ENCODE measurements at regions of chr5 and their contacts with region 1.

Region 1: GRCh38 chr5:148730943-148731861 is 76.9 kb upstream of the HTR4 start:
- DNase-seq: peak; percentile 87
- ATAC-seq: peak; percentile 88
- H3K4me3 ChIP-seq: no peak overlapping the region; the same call in 1 of the 2 replicates
- H3K27ac ChIP-seq: no peak overlapping the region
- H3K4me1 ChIP-seq: peaks cover 11% of the 10 kb centered on the region
- H3K27me3 ChIP-seq: peaks cover 5% of the 10 kb centered on the region
- CTCF ChIP-seq: peak; percentile 100
- POLR2A ChIP-seq: no peak
- RAD21 ChIP-seq: peak; percentile 87

Region 2: GRCh38 chr5:148179234-148179824 is 551.9 kb before region 1 on chr5:
- CTCF ChIA-PET with region 1: interaction called, 14 read pairs
- POLR2A ChIA-PET with region 1: no interaction called
- dilution Hi-C with region 1: no loop called
- in situ Hi-C with region 1: loop called (anchors 5 kb)
- intact Hi-C with region 1: loop called (anchors 1 kb)
- DNase-seq: peak; percentile 63
- ATAC-seq: peak; percentile 72
- H3K4me3 ChIP-seq: no peak overlapping the region
- H3K27ac ChIP-seq: no peak overlapping the region
- H3K4me1 ChIP-seq: no peaks in the 10 kb centered on the region
- H3K27me3 ChIP-seq: no peaks in the 10 kb centered on the region
- CTCF ChIP-seq: peak; percentile 65
- POLR2A ChIP-seq: no peak
- RAD21 ChIP-seq: peak; percentile 78

Region 3: GRCh38 chr5:148383564-148384379 is 347.4 kb before region 1 on chr5 and contains the start of gene FBXO38:
- CTCF ChIA-PET with region 1: no interaction called
- POLR2A ChIA-PET with region 1: no interaction called
- dilution Hi-C with region 1: no loop called
- in situ Hi-C with region 1: no loop called
- intact Hi-C with region 1: loop called (anchors 5 kb)
- DNase-seq: peak; percentile 95
- ATAC-seq: peak; percentile 89
- H3K4me3 ChIP-seq: peak within 1 kb of the TSS; percentile 70
- H3K27ac ChIP-seq: peak within 1 kb of the TSS; percentile 81
- H3K4me1 ChIP-seq: peaks cover 7% of the 10 kb centered on the region
- H3K27me3 ChIP-seq: no peaks in the 10 kb centered on the region
- CTCF ChIP-seq: no peak
- POLR2A ChIP-seq: peak; percentile 89
- RAD21 ChIP-seq: no peak
- total RNA-seq, gene FBXO38: 70.1 and 86.7 TPM in 2 replicates

Region 4: GRCh38 chr5:148482691-148483462 is 248.3 kb before region 1 on chr5:
- CTCF ChIA-PET with region 1: no interaction called
- POLR2A ChIA-PET with region 1: no interaction called
- dilution Hi-C with region 1: no loop called
- in situ Hi-C with region 1: no loop called
- intact Hi-C with region 1: no loop called
- DNase-seq: peak; percentile 34
- ATAC-seq: peak; percentile 75
- H3K4me3 ChIP-seq: no peak overlapping the region
- H3K27ac ChIP-seq: no peak overlapping the region
- H3K4me1 ChIP-seq: no peaks in the 10 kb centered on the region
- H3K27me3 ChIP-seq: peaks cover 15% of the 10 kb centered on the region
- CTCF ChIP-seq: peak; percentile 62
- POLR2A ChIP-seq: no peak
- RAD21 ChIP-seq: peak; percentile 44

Region 5: GRCh38 chr5:148511810-148512347 is 219.3 kb before region 1 on chr5:
- CTCF ChIA-PET with region 1: no interaction called
- POLR2A ChIA-PET with region 1: no interaction called
- dilution Hi-C with region 1: no loop called
- in situ Hi-C with region 1: no loop called
- intact Hi-C with region 1: no loop called
- DNase-seq: no peak
- ATAC-seq: no peak
- H3K4me3 ChIP-seq: no peak overlapping the region
- H3K27ac ChIP-seq: no peak overlapping the region
- H3K4me1 ChIP-seq: no peaks in the 10 kb centered on the region
- H3K27me3 ChIP-seq: no peaks in the 10 kb centered on the region
- CTCF ChIP-seq: no peak
- POLR2A ChIP-seq: no peak
- RAD21 ChIP-seq: no peak

Region 6: DNA sequence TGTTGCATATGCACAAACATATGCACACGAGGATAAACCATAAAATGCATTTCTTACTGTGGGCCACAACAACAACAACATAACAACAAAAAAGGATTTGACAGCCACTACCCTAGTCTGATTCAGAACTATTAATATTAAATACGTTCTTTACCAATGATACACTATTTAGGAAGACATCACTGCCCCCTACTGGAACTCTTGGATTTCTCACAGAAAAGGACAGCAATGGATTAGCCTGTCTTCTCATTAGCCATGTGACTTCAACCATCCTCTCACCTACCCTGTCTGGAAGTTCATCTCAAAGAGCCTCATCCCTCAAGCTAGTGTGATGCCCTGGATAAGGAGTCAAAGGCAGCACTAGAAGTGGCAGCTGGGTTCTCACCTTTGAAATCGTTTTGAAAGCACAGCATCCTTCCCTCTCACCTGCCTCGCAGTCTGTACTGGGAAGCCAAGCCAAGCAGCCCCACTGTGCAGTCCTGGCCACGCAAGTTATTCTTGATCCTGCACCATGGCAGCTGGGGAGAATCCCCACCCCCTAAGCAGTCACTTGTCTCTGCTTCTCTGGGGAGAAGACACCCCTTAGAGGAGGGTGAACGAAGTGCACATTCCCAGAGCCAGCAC is 267.1 kb after region 1 on chr5:
- CTCF ChIA-PET with region 1: interaction called, 5 read pairs
- POLR2A ChIA-PET with region 1: no interaction called
- dilution Hi-C with region 1: no loop called
- in situ Hi-C with region 1: no loop called
- intact Hi-C with region 1: loop called (anchors 1 kb)
- DNase-seq: peak; percentile 75
- ATAC-seq: peak; percentile 30; the same call in 1 of the 2 replicates
- H3K4me3 ChIP-seq: no peak overlapping the region
- H3K27ac ChIP-seq: no peak overlapping the region
- H3K4me1 ChIP-seq: peaks cover 11% of the 10 kb centered on the region
- H3K27me3 ChIP-seq: no peaks in the 10 kb centered on the region
- CTCF ChIP-seq: peak; percentile 73
- POLR2A ChIP-seq: no peak
- RAD21 ChIP-seq: peak; percentile 82

Region 7: DNA sequence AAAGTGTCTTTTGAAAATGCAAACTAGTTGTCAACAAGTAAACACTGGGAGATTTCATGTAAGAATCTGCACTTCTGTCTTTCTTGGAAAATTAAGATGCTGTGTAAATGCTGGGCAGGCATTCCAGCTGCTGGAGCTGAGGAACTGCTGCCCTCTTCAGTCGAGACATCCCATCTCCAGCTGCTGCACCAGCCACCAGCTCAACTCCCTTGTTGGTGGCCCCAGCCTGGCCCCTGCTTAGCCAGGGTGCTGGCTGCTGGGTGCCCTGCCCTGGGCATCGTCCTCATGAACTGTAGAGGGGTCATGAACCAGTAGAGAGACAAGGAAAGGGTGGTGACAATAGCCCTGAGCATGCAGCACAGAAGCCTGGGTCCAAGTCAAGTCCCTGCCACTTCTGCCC is 507.4 kb after region 1 on chr5:
- CTCF ChIA-PET with region 1: no interaction called
- POLR2A ChIA-PET with region 1: no interaction called
- dilution Hi-C with region 1: no loop called
- in situ Hi-C with region 1: loop called (anchors 10 kb)
- intact Hi-C with region 1: no loop called
- DNase-seq: no peak
- ATAC-seq: peak; percentile 66
- H3K4me3 ChIP-seq: no peak overlapping the region
- H3K27ac ChIP-seq: no peak overlapping the region
- H3K4me1 ChIP-seq: no peaks in the 10 kb centered on the region
- H3K27me3 ChIP-seq: no peaks in the 10 kb centered on the region
- CTCF ChIP-seq: peak; percentile 32
- POLR2A ChIP-seq: no peak
- RAD21 ChIP-seq: peak; percentile 36

Region 8: DNA sequence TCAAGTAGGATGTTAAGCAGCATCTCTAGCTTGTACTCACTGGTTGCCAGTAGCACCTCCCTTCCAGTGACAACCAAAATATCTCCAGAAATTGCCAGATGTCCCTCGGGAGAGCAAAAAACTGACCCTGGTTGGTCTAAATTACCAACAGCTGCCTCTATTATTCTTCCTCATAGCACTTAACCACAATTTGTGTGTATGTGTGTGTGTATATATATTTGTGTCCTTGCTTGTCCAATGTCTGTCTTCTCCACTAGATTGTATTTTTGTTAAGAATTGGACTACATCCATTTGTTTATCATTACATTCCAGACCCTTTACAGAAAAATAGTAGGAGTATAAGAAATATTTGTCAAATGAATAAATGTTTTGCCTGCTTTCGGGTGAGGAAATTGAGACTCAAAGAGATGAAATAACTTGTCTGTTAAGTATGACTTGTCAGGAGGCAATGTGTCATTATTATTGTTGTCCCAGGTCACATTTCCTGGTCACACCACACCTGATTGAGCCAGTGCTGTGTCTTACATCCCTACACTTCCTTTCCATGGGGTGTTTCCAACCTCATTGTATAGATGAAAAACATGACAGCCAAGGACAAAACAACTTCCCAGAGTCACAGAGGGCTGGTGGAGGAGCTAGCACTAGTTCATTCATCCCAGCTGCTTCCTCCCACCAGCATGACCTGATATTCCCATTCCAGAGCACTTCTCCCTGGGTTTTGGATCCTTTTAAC is 602.7 kb after region 1 on chr5:
- CTCF ChIA-PET with region 1: no interaction called
- POLR2A ChIA-PET with region 1: no interaction called
- dilution Hi-C with region 1: no loop called
- in situ Hi-C with region 1: no loop called
- intact Hi-C with region 1: no loop called
- DNase-seq: peak; percentile 56
- ATAC-seq: peak; percentile 89
- H3K4me3 ChIP-seq: no peak overlapping the region
- H3K27ac ChIP-seq: peak overlapping the region; percentile 6; the same call in 1 of the 2 replicates
- H3K4me1 ChIP-seq: peaks cover 6% of the 10 kb centered on the region
- H3K27me3 ChIP-seq: no peaks in the 10 kb centered on the region
- CTCF ChIP-seq: no peak
- POLR2A ChIP-seq: no peak
- RAD21 ChIP-seq: no peak

Measured in IMR-90 (cell line).